ENCODE measurements at regions of chr6 and their contacts with region 1.

Region 1: GRCh38 chr6:137799950-137800568 is 67.0 kb upstream of the TNFAIP3 start:
- DNase-seq: peak; percentile 86
- H3K4me3 Mint-ChIP-seq: no peak overlapping the region
- H3K27ac Mint-ChIP-seq: peak overlapping the region; percentile 73
- H3K4me1 Mint-ChIP-seq: peaks cover 60% of the 10 kb centered on the region
- H3K27me3 Mint-ChIP-seq: no peaks in the 10 kb centered on the region

Region 2: DNA sequence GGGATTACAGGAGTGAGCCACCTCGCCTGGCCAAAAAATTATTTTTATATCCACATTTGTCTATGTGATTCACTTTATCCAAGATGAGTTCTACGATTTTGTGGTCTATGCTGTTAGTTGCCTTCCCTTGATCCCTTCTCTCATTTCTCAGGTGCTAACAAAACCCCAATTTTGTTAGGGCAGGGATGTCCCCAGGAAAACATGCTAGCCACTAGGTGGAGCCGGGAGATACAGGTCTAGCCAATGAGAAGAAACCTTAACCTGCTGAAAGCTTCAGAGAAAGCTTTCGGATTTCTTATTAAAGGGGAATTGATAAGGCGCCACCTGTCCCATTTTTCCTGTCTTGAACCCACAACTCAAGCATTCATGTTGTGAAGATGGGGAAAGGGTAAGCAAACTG is 138.5 kb before region 1 on chr6:
- CTCF ChIA-PET with region 1: interaction called, 3 read pairs
- intact Hi-C with region 1: loop called (anchors 5 kb)
- DNase-seq: peak; percentile 71
- H3K4me3 Mint-ChIP-seq: no peak overlapping the region
- H3K27ac Mint-ChIP-seq: no peak overlapping the region
- H3K4me1 Mint-ChIP-seq: peaks cover 19% of the 10 kb centered on the region
- H3K27me3 Mint-ChIP-seq: peaks cover 4% of the 10 kb centered on the region

Region 3: DNA sequence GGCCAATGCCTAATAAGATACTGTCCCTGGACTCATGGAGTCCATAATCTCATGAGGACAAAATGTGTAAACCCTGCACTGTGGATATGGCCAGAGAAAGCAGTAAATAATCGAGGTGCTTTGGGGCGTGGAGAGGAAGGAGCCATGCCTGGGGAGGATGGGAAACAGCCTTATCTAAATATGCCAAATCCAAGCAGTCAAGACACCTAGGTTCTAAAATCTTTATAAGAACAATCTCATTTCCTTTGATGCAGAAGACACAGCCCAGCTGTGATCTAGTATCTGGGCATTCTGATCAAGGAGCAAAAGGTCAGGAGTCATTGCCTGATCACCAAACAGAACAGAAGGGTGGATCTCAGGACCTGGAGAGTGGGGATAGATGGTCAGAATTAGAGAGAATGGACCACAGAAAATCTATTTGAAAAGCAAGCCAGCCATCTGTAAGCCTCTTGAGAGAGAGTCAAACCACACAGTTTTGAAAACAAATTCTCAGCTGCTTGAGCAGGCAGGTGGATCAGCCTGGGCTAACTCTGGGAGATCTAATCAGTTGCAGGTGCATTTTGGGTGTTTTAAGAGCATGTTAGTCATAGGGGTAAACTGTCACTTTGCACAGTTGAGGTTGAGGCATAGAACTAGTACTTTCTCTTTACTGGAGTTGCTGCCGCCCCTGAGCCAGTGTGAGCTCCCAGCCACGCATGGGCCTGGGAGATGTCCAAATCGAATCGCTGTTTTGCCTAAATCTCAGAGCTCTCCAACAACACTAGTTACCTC is 63.8 kb before region 1 on chr6:
- CTCF ChIA-PET with region 1: no interaction called
- intact Hi-C with region 1: no loop called
- DNase-seq: peak; percentile 25
- H3K4me3 Mint-ChIP-seq: no peak overlapping the region
- H3K27ac Mint-ChIP-seq: no peak overlapping the region
- H3K4me1 Mint-ChIP-seq: peaks cover 18% of the 10 kb centered on the region
- H3K27me3 Mint-ChIP-seq: peaks cover 2% of the 10 kb centered on the region

Region 4: DNA sequence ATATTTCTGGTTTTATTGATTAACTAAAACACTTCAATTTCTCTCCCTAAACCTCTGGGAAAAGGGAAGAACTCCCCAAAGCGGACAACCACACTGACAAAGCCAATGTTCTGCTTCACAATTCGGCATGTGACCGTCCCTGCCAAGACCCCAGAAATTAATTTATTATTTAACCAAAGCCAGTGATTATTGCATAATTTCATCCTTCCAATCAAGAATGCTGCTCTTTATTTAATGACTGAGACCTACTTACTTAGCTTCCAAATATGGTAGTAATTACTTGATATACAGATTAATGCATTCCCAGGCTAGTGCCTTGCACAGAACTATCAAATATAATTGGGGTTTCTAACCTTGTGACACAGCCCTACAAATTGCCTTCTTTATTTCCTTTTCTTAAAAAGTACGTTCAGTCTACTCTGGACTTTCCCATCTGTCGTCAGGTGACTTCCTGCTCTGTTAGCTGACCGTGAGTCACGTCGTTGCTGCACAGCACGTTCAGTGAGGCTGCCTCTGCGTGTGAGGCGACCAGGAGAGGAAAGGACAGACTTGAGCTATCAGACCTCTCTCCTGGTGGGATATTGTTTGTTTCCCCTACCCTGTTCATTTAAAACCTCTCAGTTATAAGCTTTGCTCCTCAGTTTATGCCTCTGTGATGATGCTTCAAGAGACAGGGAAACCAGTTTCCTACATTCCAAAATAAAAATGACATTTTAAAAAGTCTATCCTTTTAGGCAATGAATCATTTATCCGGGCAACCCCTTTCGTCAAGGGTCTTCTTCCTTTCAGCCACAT is 11.3 kb after region 1 on chr6:
- CTCF ChIA-PET with region 1: interaction called, 31 read pairs
- intact Hi-C with region 1: loop called (anchors 1 kb)
- DNase-seq: peak; percentile 93
- H3K4me3 Mint-ChIP-seq: peak overlapping the region; percentile 52
- H3K27ac Mint-ChIP-seq: peak overlapping the region; percentile 94
- H3K4me1 Mint-ChIP-seq: peaks cover 75% of the 10 kb centered on the region
- H3K27me3 Mint-ChIP-seq: no peaks in the 10 kb centered on the region

Region 5: GRCh38 chr6:137829522-137830083 is 29.5 kb after region 1 on chr6:
- CTCF ChIA-PET with region 1: interaction called, 46 read pairs
- intact Hi-C with region 1: loop called (anchors 1 kb)
- DNase-seq: no peak
- H3K4me3 Mint-ChIP-seq: no peak overlapping the region
- H3K27ac Mint-ChIP-seq: peak overlapping the region; percentile 96
- H3K4me1 Mint-ChIP-seq: peaks cover 61% of the 10 kb centered on the region
- H3K27me3 Mint-ChIP-seq: no peaks in the 10 kb centered on the region

Region 6: GRCh38 chr6:137866914-137867684 is 67.0 kb after region 1 on chr6 and contains the start of gene TNFAIP3:
- CTCF ChIA-PET with region 1: interaction called, 62 read pairs
- intact Hi-C with region 1: loop called (anchors 1 kb)
- DNase-seq: peak; percentile 97
- H3K4me3 Mint-ChIP-seq: peak within 1 kb of the TSS; percentile 89
- H3K27ac Mint-ChIP-seq: peak within 1 kb of the TSS; percentile 99
- H3K4me1 Mint-ChIP-seq: peaks cover 32% of the 10 kb centered on the region
- H3K27me3 Mint-ChIP-seq: no peaks in the 10 kb centered on the region
- total RNA-seq, gene TNFAIP3: 289 to 294 TPM

Region 7: GRCh38 chr6:137903933-137904821 is 104.1 kb after region 1 on chr6:
- CTCF ChIA-PET with region 1: interaction called, 3 read pairs
- intact Hi-C with region 1: loop called (anchors 2 kb)
- DNase-seq: peak; percentile 77
- H3K4me3 Mint-ChIP-seq: peak overlapping the region; percentile 71
- H3K27ac Mint-ChIP-seq: peak overlapping the region; percentile 100
- H3K4me1 Mint-ChIP-seq: peaks cover 71% of the 10 kb centered on the region
- H3K27me3 Mint-ChIP-seq: no peaks in the 10 kb centered on the region